ENCODE measurements at regions of chrX and their contacts with region 1.

Region 1: GRCh38 chrX:65985922-65986588 is 53.8 kb downstream of the VSIG4 start:
- DNase-seq: peak; percentile 55
- ATAC-seq: peak; percentile 98
- H3K4me3 ChIP-seq: no peak overlapping the region
- H3K27ac ChIP-seq: no peak overlapping the region
- H3K4me1 ChIP-seq: no peaks in the 10 kb centered on the region
- H3K27me3 ChIP-seq: no peaks in the 10 kb centered on the region
- CTCF ChIP-seq: peak; percentile 53 to 67 (median 58); a peak in 5 of 6 replicates
- EP300 ChIP-seq: no peak
- POLR2A ChIP-seq: no peak
- RAD21 ChIP-seq: peak; percentile 81

Region 2: GRCh38 chrX:65587616-65588526 is 398.2 kb before region 1 on chrX:
- CTCF ChIA-PET with region 1: interaction called, 6 read pairs
- POLR2A ChIA-PET with region 1: no interaction called
- RAD21 ChIA-PET with region 1: interaction called, 6 read pairs
- SMC1A ChIA-PET with region 1: interaction called, 3 read pairs
- in situ Hi-C with region 1: loop called (anchors 5 kb)
- intact Hi-C with region 1: no loop called
- DNase-seq: no peak
- ATAC-seq: no peak
- H3K4me3 ChIP-seq: no peak overlapping the region
- H3K27ac ChIP-seq: no peak overlapping the region
- H3K4me1 ChIP-seq: peaks cover 5% of the 10 kb centered on the region; the same call in 1 of the 2 replicates
- H3K27me3 ChIP-seq: no peaks in the 10 kb centered on the region
- CTCF ChIP-seq: no peak
- EP300 ChIP-seq: no peak
- POLR2A ChIP-seq: no peak
- RAD21 ChIP-seq: no peak

Region 3: GRCh38 chrX:65658229-65658628 is 327.8 kb before region 1 on chrX:
- CTCF ChIA-PET with region 1: no interaction called
- POLR2A ChIA-PET with region 1: no interaction called
- RAD21 ChIA-PET with region 1: no interaction called
- SMC1A ChIA-PET with region 1: no interaction called
- in situ Hi-C with region 1: no loop called
- intact Hi-C with region 1: no loop called
- DNase-seq: no peak
- ATAC-seq: peak; percentile 68
- H3K4me3 ChIP-seq: no peak overlapping the region
- H3K27ac ChIP-seq: peak overlapping the region; percentile 12; the same call in 1 of the 2 replicates
- H3K4me1 ChIP-seq: no peaks in the 10 kb centered on the region; the same call in 1 of the 2 replicates
- H3K27me3 ChIP-seq: no peaks in the 10 kb centered on the region
- CTCF ChIP-seq: no peak
- EP300 ChIP-seq: no peak
- POLR2A ChIP-seq: no peak
- RAD21 ChIP-seq: no peak

Region 4: DNA sequence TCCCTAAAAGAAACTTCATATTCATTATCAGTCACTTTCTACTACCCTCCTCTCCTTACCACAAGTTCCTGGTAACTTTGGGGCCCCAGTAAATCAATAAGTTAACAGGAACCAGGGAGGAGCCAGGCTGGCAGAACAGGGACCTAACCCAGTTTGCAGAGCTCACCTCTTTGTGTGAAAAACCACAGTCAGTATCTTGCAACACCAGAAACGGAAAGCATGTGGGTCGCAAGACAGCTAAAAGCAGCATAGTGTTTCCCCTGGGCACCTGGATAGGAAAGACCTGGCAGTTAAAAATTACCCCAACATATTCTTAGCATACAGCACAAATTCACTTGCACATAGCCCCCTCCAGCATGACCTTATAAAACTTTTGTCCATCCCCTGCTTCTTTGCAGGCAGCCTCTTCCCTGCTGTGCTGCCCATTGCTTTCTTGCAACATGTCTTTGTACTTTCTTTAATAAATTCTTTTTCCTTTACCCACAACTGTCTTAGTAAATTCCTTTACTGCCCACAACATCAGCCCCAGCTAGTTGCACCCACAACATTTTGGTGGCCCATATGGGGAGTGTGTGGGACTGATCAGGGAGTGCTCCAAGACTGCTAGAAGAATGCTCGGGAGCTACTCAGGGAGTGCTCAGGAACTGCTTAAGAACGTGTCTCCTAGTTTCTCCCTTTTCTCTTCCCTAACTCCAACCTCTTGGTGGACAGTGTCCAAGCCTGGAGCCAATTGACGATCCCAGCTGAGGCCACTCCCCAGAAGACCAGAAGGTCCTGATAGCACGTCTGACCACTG is 235.2 kb before region 1 on chrX:
- CTCF ChIA-PET with region 1: interaction called, 11 read pairs
- POLR2A ChIA-PET with region 1: no interaction called
- RAD21 ChIA-PET with region 1: interaction called, 8 read pairs
- SMC1A ChIA-PET with region 1: interaction called, 10 read pairs
- in situ Hi-C with region 1: no loop called
- intact Hi-C with region 1: no loop called
- DNase-seq: peak; percentile 65
- ATAC-seq: peak; percentile 85
- H3K4me3 ChIP-seq: no peak overlapping the region
- H3K27ac ChIP-seq: no peak overlapping the region
- H3K4me1 ChIP-seq: peaks cover 7% of the 10 kb centered on the region
- H3K27me3 ChIP-seq: no peaks in the 10 kb centered on the region
- CTCF ChIP-seq: no peak
- EP300 ChIP-seq: no peak
- POLR2A ChIP-seq: no peak
- RAD21 ChIP-seq: no peak

Region 5: GRCh38 chrX:65871661-65872311 is 114.3 kb before region 1 on chrX:
- CTCF ChIA-PET with region 1: interaction called, 4 read pairs
- POLR2A ChIA-PET with region 1: no interaction called
- RAD21 ChIA-PET with region 1: interaction called, 3 read pairs
- SMC1A ChIA-PET with region 1: no interaction called
- in situ Hi-C with region 1: no loop called
- intact Hi-C with region 1: loop called (anchors 1 kb)
- DNase-seq: peak; percentile 50
- ATAC-seq: peak; percentile 89
- H3K4me3 ChIP-seq: no peak overlapping the region
- H3K27ac ChIP-seq: no peak overlapping the region
- H3K4me1 ChIP-seq: no peaks in the 10 kb centered on the region
- H3K27me3 ChIP-seq: no peaks in the 10 kb centered on the region
- CTCF ChIP-seq: peak in 2 of 3 experiments; percentile 21 to 22; a peak in 3 of 6 replicates
- EP300 ChIP-seq: no peak
- POLR2A ChIP-seq: no peak
- RAD21 ChIP-seq: peak; percentile 48; the same call in 1 of the 2 replicates

Region 6: GRCh38 chrX:66176134-66176533 is 190.1 kb after region 1 on chrX:
- CTCF ChIA-PET with region 1: no interaction called
- POLR2A ChIA-PET with region 1: no interaction called
- RAD21 ChIA-PET with region 1: no interaction called
- SMC1A ChIA-PET with region 1: no interaction called
- in situ Hi-C with region 1: no loop called
- intact Hi-C with region 1: no loop called
- DNase-seq: no peak
- ATAC-seq: no peak
- H3K4me3 ChIP-seq: no peak overlapping the region
- H3K27ac ChIP-seq: no peak overlapping the region
- H3K4me1 ChIP-seq: no peaks in the 10 kb centered on the region
- H3K27me3 ChIP-seq: no peaks in the 10 kb centered on the region
- CTCF ChIP-seq: no peak
- EP300 ChIP-seq: no peak
- POLR2A ChIP-seq: no peak
- RAD21 ChIP-seq: no peak

Region 7: GRCh38 chrX:66408507-66408906 is 422.5 kb after region 1 on chrX:
- CTCF ChIA-PET with region 1: interaction called, 3 read pairs
- POLR2A ChIA-PET with region 1: no interaction called
- RAD21 ChIA-PET with region 1: no interaction called
- SMC1A ChIA-PET with region 1: interaction called, 3 read pairs
- in situ Hi-C with region 1: no loop called
- intact Hi-C with region 1: loop called (anchors 5 kb)
- DNase-seq: peak; percentile 11
- ATAC-seq: peak; percentile 79
- H3K4me3 ChIP-seq: no peak overlapping the region
- H3K27ac ChIP-seq: no peak overlapping the region
- H3K4me1 ChIP-seq: no peaks in the 10 kb centered on the region
- H3K27me3 ChIP-seq: no peaks in the 10 kb centered on the region
- CTCF ChIP-seq: peak; percentile 46 to 56 (median 49); a peak in 4 of 6 replicates
- EP300 ChIP-seq: no peak
- POLR2A ChIP-seq: no peak
- RAD21 ChIP-seq: peak; percentile 57

Measured in GM12878 (cell line).